Posterior cingulate gyrus (tissue), 11 donors: ENCODE measurements at regions of chr11 and their contacts with region 1.

Region 1: GRCh38 chr11:120391292-120391691 is 55.1 kb downstream of the ARHGEF12 start:
- DNase-seq: peak in 1 of 10 donors; percentile 13

Region 2: GRCh38 chr11:120335908-120336640 is 55.2 kb before region 1 on chr11 and contains the start of gene ARHGEF12:
- intact Hi-C with region 1: loop called (anchors 5 kb)
- DNase-seq: peak; percentile 87 to 98 (median 91)

Region 3: DNA sequence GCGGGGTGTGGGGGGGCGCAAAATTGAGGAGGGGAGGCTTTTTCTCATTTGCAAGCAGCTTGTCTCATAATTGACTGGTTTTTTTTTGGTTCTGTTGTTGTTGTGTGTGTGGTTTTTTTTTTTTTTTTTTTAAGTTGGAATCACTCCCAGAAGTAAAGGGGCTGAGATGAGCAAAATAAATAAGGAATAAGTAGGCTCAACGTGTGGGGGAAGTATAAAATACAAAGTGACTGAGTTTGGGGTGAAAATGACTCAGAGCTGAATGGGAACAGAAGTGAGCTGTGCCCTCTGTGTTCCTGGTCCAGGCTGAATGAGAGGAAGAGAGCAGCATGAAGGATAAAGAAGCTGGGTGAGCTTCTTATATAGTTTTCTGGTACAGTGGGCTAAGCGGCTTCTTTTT is 210.2 kb after region 1 on chr11:
- intact Hi-C with region 1: no loop called
- DNase-seq: no peak